PC-3 (cell line): ENCODE measurements at regions of chr20 and their contacts with region 1.

Region 1: DNA sequence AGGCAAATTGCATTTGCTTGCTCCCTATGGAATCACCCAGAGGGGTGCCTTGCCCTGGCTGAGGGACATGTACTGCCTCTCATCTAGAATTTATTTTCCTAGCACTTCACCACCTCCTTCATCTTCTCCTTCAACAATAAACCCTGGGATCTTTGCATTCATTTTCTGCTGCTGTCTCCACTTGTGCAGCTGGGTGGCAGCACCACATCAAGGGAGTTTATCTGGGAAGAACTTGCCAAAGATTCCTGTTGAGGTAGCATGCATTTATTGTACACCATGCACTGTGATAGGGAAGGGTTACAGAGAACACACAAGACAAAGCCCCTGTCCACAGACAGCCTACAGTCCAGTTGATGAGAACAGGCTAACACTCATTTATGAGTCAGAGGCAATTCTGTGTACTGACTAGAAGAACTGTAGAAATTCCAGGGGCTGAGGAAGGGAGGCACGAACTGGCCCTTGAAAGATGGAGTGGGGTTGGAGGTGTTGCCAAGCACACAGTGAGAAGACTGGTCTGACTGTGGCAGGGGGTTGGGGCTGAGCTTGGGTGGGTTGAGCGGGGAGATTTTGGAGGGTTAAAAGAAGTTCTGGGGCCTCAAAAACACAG is 17.5 kb downstream of the C20orf173 start:
- DNase-seq: peak; percentile 68
- ATAC-seq: 0 out of 2 replicates have a peak, but pooled peaks have one; percentile 5
- H3K4me3 ChIP-seq: no peak overlapping the region
- H3K27ac ChIP-seq: no peak overlapping the region
- H3K4me1 ChIP-seq: peaks cover 25% of the 10 kb centered on the region
- H3K27me3 ChIP-seq: no peaks in the 10 kb centered on the region
- CTCF ChIP-seq: peak; percentile 92

Region 2: GRCh38 chr20:35541783-35542588 is 30.1 kb after region 1 on chr20 and contains the start of gene ERGIC3:
- CTCF ChIA-PET with region 1: interaction called, 3 read pairs
- POLR2A ChIA-PET with region 1: no interaction called
- intact Hi-C with region 1: loop called (anchors 2 kb)
- DNase-seq: peak; percentile 97
- ATAC-seq: peak; percentile 98
- H3K4me3 ChIP-seq: peak within 1 kb of the TSS; percentile 89
- H3K27ac ChIP-seq: peak within 1 kb of the TSS; percentile 69
- H3K4me1 ChIP-seq: peaks cover 14% of the 10 kb centered on the region
- H3K27me3 ChIP-seq: no peaks in the 10 kb centered on the region
- CTCF ChIP-seq: no peak
- total RNA-seq, gene ERGIC3: 284 and 376 TPM in 2 replicates

Region 3: DNA sequence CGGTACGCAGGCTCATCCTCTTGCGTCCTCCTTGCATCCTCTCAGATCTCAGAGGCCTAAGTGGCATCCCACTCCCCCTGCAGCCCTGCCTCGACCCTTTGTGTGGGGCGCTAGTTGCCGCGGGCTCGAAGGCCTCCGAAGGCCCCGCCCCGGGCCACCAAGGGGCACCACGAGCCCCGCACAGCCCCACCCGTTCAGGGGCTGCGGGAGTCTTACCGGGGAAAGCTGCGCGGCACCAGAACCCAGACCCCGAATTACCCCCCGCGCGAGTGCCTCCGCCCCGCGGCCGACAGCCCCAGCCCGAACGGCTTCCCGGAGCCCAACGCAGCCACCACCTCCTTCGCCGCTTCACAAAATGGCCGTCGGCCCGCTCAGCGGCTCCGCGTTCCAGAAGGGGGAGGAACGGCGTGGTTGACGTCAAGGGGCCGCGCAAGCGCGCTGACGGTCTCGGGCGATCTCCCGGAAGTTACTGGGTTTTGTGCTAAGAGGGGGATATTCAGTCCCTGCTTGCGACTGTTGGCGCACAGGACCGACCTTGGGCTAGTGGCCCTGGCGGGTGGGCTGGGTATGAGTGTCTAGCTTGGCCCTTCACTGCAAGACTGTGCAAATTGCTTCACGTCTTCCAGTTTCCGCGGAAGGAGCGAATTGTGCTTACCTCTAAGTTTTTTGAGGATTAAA is 152.8 kb after region 1 on chr20 and contains the starts of genes CPNE1 and RBM12:
- CTCF ChIA-PET with region 1: no interaction called
- POLR2A ChIA-PET with region 1: no interaction called
- intact Hi-C with region 1: loop called (anchors 10 kb)
- DNase-seq: peak; percentile 93
- ATAC-seq: peak; percentile 83
- H3K4me3 ChIP-seq: peak within 1 kb of the TSS; percentile 79
- H3K27ac ChIP-seq: peak within 1 kb of the TSS; percentile 76
- H3K4me1 ChIP-seq: peaks cover 33% of the 10 kb centered on the region
- H3K27me3 ChIP-seq: no peaks in the 10 kb centered on the region
- CTCF ChIP-seq: no peak
- total RNA-seq, gene CPNE1: 222 and 274 TPM in 2 replicates
- total RNA-seq, gene RBM12: 43.5 and 53.6 TPM in 2 replicates

Region 4: DNA sequence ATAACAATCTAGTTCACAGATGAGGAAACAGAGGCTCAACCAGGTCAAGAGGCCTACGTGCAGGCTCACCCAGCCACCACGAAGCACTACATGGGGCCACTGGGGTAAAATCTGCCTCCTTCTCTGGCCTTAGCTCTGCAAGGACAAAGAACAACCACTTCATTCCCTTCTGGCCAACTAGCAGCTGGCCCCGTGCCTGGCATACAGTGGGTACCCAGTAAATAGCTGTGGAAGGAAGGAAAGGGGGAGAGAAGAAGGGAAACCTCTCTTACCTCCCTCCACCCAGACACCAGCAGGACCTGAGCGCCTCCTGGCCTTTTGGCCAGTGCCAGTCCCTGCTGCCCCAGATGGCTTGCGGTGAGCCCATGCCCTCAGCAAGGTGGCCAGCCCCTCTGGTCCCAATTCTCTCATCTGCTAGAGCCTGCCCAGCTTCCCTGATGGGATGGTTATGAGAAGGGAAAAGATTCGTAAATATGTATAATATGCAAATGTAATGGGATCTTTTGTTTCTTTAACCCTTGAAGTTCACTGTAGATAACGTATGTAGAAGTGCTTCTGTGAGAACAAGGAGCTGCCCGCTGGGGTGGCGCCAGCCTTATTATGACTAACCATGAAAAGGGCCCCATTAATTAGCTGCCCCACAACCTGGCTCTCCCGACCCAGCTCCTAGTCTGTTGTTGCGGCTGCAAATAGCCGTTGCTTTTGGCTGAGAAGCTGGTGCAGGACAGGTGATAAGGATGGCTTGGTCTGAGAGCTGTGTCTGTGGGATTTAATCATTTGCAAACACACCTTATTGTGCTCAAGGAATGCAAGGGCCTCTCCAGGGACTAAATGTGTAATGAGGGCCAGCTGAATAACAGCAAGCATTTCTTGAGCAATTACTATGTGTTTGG is 856.2 kb after region 1 on chr20:
- CTCF ChIA-PET with region 1: no interaction called
- POLR2A ChIA-PET with region 1: no interaction called
- intact Hi-C with region 1: no loop called
- DNase-seq: no peak
- ATAC-seq: no peak
- H3K4me3 ChIP-seq: no peak overlapping the region
- H3K27ac ChIP-seq: no peak overlapping the region
- H3K4me1 ChIP-seq: no peaks in the 10 kb centered on the region
- H3K27me3 ChIP-seq: peaks cover 38% of the 10 kb centered on the region
- CTCF ChIP-seq: no peak